Heart right ventricle (tissue), 16 donors: ENCODE measurements at regions of chr15 and their contacts with region 1.

Region 1: GRCh38 chr15:75738647-75739331 is 26.1 kb upstream of the CSPG4 start:
- DNase-seq: peak; percentile 93 to 95
- ATAC-seq: peak; percentile 96 to 99 (median 98)
- H3K4me3 ChIP-seq: peak overlapping the region; percentile 59 to 93 (median 72)
- H3K27ac ChIP-seq: peak overlapping the region in 4 of 10 donors; percentile 20 to 54 (median 43)
- H3K4me1 ChIP-seq: peaks cover 6 to 32% (median 14%) of the 10 kb centered on the region in 9 donors
- H3K27me3 ChIP-seq: no peaks in the 10 kb centered on the region
- CTCF ChIP-seq: no peak

Region 2: GRCh38 chr15:75790631-75791336 is 52.0 kb after region 1 on chr15:
- intact Hi-C with region 1: loop called in 1 of 10 experiments (anchors 10 kb)
- DNase-seq: no peak
- ATAC-seq: no peak
- H3K4me3 ChIP-seq: no peak overlapping the region
- H3K27ac ChIP-seq: no peak overlapping the region
- H3K4me1 ChIP-seq: no peaks in the 10 kb centered on the region
- H3K27me3 ChIP-seq: peaks cover 0 to 46% (median 14%) of the 10 kb centered on the region in 7 donors
- CTCF ChIP-seq: no peak